ENCODE measurements at regions of chr1 and their contacts with region 1.

Region 1: DNA sequence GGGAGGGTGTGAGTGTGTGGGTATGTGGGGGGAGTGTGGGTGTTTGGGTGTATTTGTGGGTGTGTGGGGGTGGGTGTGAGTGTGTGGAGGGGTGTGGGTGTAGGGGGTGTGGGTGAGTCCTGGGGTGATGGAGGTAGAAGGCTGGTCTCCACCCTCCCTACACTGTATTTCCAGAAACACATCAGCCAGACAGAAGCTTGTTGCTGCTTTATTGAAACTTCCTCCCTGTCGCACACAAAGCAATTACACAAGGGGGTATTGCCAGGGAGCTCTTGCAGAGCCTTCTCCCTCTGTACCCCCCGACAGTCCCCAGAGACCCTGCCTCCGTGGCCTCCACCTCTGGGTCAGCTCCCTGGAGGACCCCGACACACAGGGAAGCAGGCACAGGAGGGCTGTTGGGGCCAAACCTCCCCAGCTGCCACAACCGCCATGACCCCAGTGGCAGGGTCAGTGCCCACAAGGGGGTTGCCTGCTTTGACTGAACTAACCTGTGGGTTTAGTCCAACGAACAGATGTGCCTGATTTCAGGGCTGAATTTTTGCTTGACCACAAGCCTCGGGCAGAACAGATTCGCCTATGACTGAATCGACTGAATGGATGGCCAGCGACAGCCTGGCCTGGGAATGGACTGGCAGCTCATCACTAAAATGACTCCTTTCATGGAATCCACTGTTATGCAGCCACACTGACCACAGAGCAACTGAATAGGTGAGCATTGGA is 9.1 kb upstream of the MATN1 start:
- DNase-seq: peak; percentile 77
- CTCF ChIP-seq: no peak

Region 2: GRCh38 chr1:30525971-30526651 is 206.3 kb before region 1 on chr1:
- in situ Hi-C with region 1: no loop called
- DNase-seq: no peak
- CTCF ChIP-seq: no peak

Region 3: DNA sequence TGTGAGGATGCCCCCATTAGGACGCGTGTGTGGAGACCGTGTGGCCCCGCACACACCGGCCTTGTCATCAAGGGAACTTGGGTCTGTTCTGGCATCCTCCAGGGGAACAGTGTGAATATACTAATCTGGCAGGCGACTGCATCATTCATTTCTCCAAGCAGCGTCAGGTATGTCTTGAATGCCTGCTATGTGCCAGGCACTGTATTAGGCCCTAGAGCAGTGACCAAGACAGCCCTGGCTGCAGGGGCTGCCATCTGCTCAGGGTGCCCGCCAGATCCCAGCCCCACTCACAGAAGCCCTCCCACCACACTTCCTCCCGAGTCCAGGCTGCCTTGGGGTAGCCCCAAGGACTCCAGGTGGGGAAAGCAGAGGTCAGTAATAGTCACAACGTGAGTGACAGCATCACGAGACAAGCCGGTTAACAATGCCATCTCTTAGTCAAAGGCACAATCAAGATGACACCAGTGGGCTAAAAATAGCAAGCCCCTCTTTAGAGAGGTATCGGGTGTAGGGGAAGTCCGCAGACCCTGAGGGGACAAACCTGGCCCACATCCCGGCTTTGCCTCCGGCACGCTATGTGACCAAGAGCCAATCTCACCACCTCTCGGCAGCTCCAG is 32.6 kb after region 1 on chr1:
- in situ Hi-C with region 1: loop called (anchors 5 kb)
- DNase-seq: peak; percentile 79
- CTCF ChIP-seq: no peak